Cardiac septum (tissue), 1 donor: ENCODE measurements at regions of chr6 and their contacts with region 1.

Region 1: DNA sequence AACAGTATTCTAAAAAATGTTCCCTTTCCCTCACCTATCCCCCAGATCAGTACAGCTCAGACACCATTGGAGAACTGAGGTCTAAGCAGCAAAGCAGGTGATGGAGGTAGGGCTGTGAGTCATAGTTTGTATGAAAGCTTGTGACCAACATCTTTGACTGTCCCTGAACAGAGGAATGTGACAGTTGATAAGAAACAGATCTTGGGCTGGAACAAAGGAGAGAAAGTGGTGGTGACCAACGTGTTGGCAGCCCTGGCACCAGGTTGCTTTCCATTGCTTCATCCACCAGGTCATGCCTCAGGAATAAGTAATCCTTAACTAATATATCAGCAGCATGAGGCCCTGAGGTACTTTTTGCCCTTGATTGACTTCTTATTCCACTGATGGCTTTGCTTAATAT is 19.9 kb upstream of the CRIP3 start:
- DNase-seq: no peak

Region 2: DNA sequence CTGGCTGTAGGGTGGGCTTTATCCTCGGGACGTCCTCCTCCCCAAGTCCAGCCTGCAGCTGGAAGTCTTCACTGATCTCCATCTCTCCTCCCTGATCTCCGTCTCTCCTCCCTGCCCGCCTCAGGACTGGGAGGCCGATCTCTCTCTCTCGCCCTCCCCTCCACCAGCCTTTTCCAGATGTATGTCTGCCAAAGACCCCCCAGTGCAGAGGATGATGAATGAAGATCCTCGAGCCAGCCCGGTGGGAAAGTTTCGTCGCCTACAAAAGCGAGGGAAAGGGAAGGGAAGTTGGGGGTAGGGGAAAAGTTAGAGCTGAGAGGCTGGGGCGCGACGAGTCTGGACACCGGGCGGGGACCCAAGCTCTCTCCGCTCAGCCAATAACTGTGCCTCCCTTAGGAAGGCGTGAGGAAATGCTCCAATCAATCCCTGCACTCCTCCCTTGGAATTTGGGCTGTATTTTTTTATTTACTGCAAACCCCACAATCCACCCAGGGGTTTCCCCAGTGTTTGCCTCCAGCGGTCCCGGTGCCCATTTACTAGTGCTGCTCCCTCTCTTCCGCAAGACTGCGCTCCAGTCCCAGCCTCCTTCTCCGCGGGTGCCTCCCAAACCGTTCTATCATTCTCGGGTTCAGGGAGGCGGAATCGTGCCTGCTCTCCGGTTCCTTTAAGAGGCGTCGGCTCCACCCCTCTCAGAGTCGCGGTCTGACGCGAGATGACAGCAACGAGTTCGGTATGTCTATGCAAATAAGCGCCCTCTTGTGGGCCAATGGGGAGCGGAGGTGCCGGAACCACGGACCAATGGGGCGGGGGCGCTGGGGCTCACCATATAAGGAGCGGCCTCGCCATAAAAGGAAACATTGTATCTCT is 157.9 kb before region 1 on chr6 and contains the start of gene SRF:
- intact Hi-C with region 1: no loop called
- DNase-seq: peak; percentile 100
- total RNA-seq, gene SRF: 81.2 TPM

Region 3: GRCh38 chr6:43269273-43270007 is 59.1 kb before region 1 on chr6:
- intact Hi-C with region 1: loop called (anchors 2 kb)
- DNase-seq: no peak